PC-3 (cell line): ENCODE measurements at regions of chrX and their contacts with region 1.

Region 1: GRCh38 chrX:19709812-19710518 is 177.4 kb downstream of the SH3KBP1 start:
- DNase-seq: peak; percentile 87
- ATAC-seq: peak; percentile 100
- H3K4me3 ChIP-seq: no peak overlapping the region
- H3K27ac ChIP-seq: peak overlapping the region; percentile 91
- H3K4me1 ChIP-seq: peaks cover 22% of the 10 kb centered on the region
- H3K27me3 ChIP-seq: no peaks in the 10 kb centered on the region
- CTCF ChIP-seq: no peak

Region 2: DNA sequence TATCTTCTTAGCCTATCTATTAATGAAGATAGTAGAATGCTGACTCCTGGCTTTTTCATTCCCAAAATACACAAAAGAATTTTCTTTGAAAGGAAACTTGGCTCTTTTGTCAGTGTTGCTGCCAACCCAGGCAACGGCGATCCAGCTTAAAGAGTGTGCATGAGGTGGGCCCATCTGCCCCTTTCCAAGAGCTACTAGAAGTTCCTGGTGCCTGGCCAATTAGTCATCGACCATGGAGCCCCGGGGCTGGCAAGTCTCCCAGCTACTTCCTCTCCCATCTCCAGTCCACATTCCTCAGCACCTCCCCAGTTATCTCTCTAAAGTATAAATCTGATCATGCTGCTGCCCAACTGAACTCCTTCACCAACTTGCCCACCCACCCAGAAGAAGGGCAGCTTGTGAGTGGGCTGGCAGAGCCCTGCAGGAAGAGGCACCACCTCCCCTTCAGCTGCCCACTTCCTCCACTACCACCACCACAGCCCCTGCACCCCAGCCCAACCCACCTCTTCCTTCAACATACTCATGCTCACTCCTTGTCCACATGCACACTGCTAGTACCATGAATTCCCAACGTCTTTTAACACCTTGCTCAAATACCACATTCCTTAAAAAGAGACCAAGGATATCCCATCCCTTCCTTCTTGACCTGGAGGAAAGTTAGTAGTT is 36.5 kb before region 1 on chrX:
- CTCF ChIA-PET with region 1: no interaction called
- POLR2A ChIA-PET with region 1: interaction called, 3 read pairs
- intact Hi-C with region 1: loop called (anchors 5 kb)
- DNase-seq: peak; percentile 95
- ATAC-seq: peak; percentile 50
- H3K4me3 ChIP-seq: 0 out of 2 replicates have a peak overlapping the region, but pooled peaks have one; percentile 27
- H3K27ac ChIP-seq: peak overlapping the region; percentile 94
- H3K4me1 ChIP-seq: peaks cover 67% of the 10 kb centered on the region
- H3K27me3 ChIP-seq: no peaks in the 10 kb centered on the region
- CTCF ChIP-seq: no peak

Region 3: DNA sequence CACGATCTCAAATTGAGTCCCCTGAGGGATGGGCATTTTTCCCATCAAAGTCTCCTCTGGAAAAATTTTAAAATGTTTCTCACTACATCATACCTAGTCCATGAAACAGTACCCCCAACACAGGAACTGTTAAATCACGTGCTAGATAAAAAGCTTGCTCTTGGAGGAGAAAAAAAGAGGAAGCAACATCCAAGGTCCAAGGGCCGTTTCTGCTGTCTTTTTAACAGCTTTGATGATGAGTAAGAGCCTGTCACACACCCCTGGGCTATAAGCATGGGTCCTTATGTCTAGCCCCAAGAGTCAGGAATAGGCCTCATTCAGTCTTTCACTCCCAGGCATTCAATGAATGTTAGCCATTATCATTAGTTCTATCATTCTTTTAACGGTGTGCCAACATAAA is 48.6 kb after region 1 on chrX:
- CTCF ChIA-PET with region 1: no interaction called
- POLR2A ChIA-PET with region 1: no interaction called
- intact Hi-C with region 1: no loop called
- DNase-seq: peak; percentile 37
- ATAC-seq: no peak
- H3K4me3 ChIP-seq: no peak overlapping the region
- H3K27ac ChIP-seq: no peak overlapping the region
- H3K4me1 ChIP-seq: peaks cover 25% of the 10 kb centered on the region
- H3K27me3 ChIP-seq: no peaks in the 10 kb centered on the region
- CTCF ChIP-seq: no peak

Region 4: DNA sequence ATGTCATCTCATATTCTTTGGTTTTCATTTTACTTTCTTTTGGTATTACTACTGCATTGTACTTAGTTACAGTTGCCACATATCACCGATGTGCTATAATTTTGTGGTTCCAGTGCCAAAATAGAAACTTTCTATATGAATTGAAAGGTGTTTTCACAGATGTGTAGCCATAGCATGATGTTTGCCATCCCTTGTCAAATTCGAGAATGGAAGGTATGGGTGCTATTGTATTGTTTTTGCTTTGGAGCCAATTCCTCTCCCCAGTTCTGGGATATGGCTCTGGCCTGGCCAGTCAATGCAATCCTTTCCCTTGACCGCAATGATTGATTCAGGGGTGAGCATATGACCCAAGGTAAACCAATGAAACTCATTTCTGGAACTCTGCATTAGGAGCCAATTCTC is 643.0 kb after region 1 on chrX:
- CTCF ChIA-PET with region 1: no interaction called
- POLR2A ChIA-PET with region 1: no interaction called
- intact Hi-C with region 1: no loop called
- DNase-seq: no peak
- ATAC-seq: no peak
- H3K4me3 ChIP-seq: no peak overlapping the region
- H3K27ac ChIP-seq: no peak overlapping the region
- H3K4me1 ChIP-seq: no peaks in the 10 kb centered on the region
- H3K27me3 ChIP-seq: no peaks in the 10 kb centered on the region
- CTCF ChIP-seq: no peak